Activated CD4-positive, alpha-beta memory T cell treated with anti-CD3 and anti-CD28 coated beads, Interleukin-2, amount 10 ng/mL, durations not matched to agents 7 days and 5 days (primary cell): ENCODE measurements at regions of chr12 and their contacts with region 1.

Region 1: GRCh38 chr12:68610370-68611093 is at the start of gene RAP1B:
- DNase-seq: peak; percentile 92
- H3K4me3 Mint-ChIP-seq: peak within 1 kb of the TSS; percentile 83
- H3K27ac Mint-ChIP-seq: peak within 1 kb of the TSS; percentile 94
- H3K4me1 Mint-ChIP-seq: peaks cover 38% of the 10 kb centered on the region
- H3K27me3 Mint-ChIP-seq: no peaks in the 10 kb centered on the region
- total RNA-seq, gene RAP1B: 290 to 291 TPM

Region 2: GRCh38 chr12:68119724-68120211 is 490.8 kb before region 1 on chr12:
- CTCF ChIA-PET with region 1: no interaction called
- POLR2A ChIA-PET with region 1: interaction called, 17 read pairs
- DNase-seq: peak; percentile 78
- H3K4me3 Mint-ChIP-seq: peak overlapping the region; percentile 28
- H3K27ac Mint-ChIP-seq: no peak overlapping the region
- H3K4me1 Mint-ChIP-seq: peaks cover 31% of the 10 kb centered on the region
- H3K27me3 Mint-ChIP-seq: no peaks in the 10 kb centered on the region

Region 3: GRCh38 chr12:68374307-68374982 is 236.1 kb before region 1 on chr12:
- CTCF ChIA-PET with region 1: interaction called, 3 read pairs
- POLR2A ChIA-PET with region 1: interaction called, 53 read pairs
- DNase-seq: peak; percentile 82
- H3K4me3 Mint-ChIP-seq: peak overlapping the region; percentile 46
- H3K27ac Mint-ChIP-seq: peak overlapping the region; percentile 96
- H3K4me1 Mint-ChIP-seq: peaks cover 61% of the 10 kb centered on the region
- H3K27me3 Mint-ChIP-seq: no peaks in the 10 kb centered on the region

Region 4: GRCh38 chr12:68482660-68483059 is 127.9 kb before region 1 on chr12:
- CTCF ChIA-PET with region 1: interaction called, 7 read pairs
- POLR2A ChIA-PET with region 1: interaction called, 155 read pairs
- DNase-seq: peak; percentile 73
- H3K4me3 Mint-ChIP-seq: peak overlapping the region; percentile 42
- H3K27ac Mint-ChIP-seq: peak overlapping the region; percentile 90
- H3K4me1 Mint-ChIP-seq: peaks cover 69% of the 10 kb centered on the region
- H3K27me3 Mint-ChIP-seq: no peaks in the 10 kb centered on the region

Region 5: DNA sequence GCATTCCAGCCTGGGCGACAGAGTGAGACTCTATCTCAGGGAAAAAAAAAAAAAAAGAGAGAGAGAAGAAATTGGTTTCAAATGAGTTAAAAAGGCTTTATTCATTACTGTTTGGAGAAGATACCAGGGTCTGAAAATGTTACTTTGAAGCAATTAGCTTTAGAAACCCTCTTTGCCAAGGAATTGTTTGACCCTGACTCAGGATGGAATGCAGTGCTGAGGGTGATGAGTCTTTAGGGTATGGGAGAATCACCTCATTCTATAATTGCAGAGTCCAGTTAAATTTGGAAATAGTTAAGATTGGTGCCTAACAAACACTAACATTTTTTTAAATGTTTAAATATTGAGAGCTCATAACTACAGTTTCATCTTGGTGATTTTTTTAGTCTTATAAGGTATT is 13.5 kb after region 1 on chr12:
- CTCF ChIA-PET with region 1: interaction called, 4 read pairs
- POLR2A ChIA-PET with region 1: interaction called, 64 read pairs
- DNase-seq: no peak
- H3K4me3 Mint-ChIP-seq: no peak overlapping the region
- H3K27ac Mint-ChIP-seq: no peak overlapping the region
- H3K4me1 Mint-ChIP-seq: peaks cover 63% of the 10 kb centered on the region
- H3K27me3 Mint-ChIP-seq: no peaks in the 10 kb centered on the region

Region 6: GRCh38 chr12:68745904-68746571 is 135.5 kb after region 1 on chr12 and contains the start of gene SLC35E3:
- CTCF ChIA-PET with region 1: no interaction called
- POLR2A ChIA-PET with region 1: interaction called, 13 read pairs
- DNase-seq: peak; percentile 95
- H3K4me3 Mint-ChIP-seq: peak within 1 kb of the TSS; percentile 95
- H3K27ac Mint-ChIP-seq: peak within 1 kb of the TSS; percentile 80
- H3K4me1 Mint-ChIP-seq: peaks cover 51% of the 10 kb centered on the region
- H3K27me3 Mint-ChIP-seq: no peaks in the 10 kb centered on the region
- total RNA-seq, gene SLC35E3: 8.2 to 8.8 TPM